ENCODE measurements at regions of chr15 and their contacts with region 1.

Region 1: GRCh38 chr15:98518823-98519561 is 129.3 kb upstream of the IGF1R start:
- DNase-seq: peak; percentile 80
- H3K4me3 Mint-ChIP-seq: no peak overlapping the region
- H3K27ac Mint-ChIP-seq: no peak overlapping the region
- H3K4me1 Mint-ChIP-seq: peaks cover 4% of the 10 kb centered on the region
- H3K27me3 Mint-ChIP-seq: no peaks in the 10 kb centered on the region
- CTCF ChIP-seq: peak; percentile 53

Region 2: GRCh38 chr15:98187549-98187948 is 331.4 kb before region 1 on chr15:
- CTCF ChIA-PET with region 1: no interaction called
- POLR2A ChIA-PET with region 1: no interaction called
- intact Hi-C with region 1: no loop called
- DNase-seq: no peak
- H3K4me3 Mint-ChIP-seq: no peak overlapping the region
- H3K27ac Mint-ChIP-seq: no peak overlapping the region
- H3K4me1 Mint-ChIP-seq: no peaks in the 10 kb centered on the region
- H3K27me3 Mint-ChIP-seq: peaks cover 11% of the 10 kb centered on the region
- CTCF ChIP-seq: no peak

Region 3: GRCh38 chr15:98421419-98422129 is 97.4 kb before region 1 on chr15:
- CTCF ChIA-PET with region 1: no interaction called
- POLR2A ChIA-PET with region 1: no interaction called
- intact Hi-C with region 1: no loop called
- DNase-seq: peak; percentile 45
- H3K4me3 Mint-ChIP-seq: no peak overlapping the region
- H3K27ac Mint-ChIP-seq: no peak overlapping the region
- H3K4me1 Mint-ChIP-seq: no peaks in the 10 kb centered on the region
- H3K27me3 Mint-ChIP-seq: peaks cover 3% of the 10 kb centered on the region
- CTCF ChIP-seq: peak; percentile 94

Region 4: DNA sequence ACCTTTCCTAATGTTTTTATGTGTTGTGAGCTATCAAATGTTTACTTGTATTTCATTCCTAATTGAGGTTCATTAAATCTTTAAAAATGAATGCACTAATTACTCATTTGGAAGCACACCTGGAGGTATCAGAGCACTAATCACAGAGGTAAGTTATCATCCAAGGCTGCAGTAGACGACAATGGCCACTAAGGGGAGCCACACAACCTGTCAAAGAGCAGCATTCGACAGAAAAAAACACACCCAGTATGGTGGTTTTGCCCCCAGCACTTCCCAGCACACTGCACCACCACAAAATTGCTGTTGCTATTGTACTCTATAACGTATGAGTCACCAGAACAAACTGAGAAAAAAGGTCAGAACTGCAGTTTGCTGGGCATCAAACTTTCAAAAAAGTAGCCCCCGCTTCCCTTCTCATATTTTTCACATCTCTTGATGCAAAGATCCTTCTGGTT is 76.6 kb before region 1 on chr15:
- CTCF ChIA-PET with region 1: interaction called, 5 read pairs
- POLR2A ChIA-PET with region 1: no interaction called
- intact Hi-C with region 1: loop called (anchors 5 kb)
- DNase-seq: peak; percentile 89
- H3K4me3 Mint-ChIP-seq: no peak overlapping the region
- H3K27ac Mint-ChIP-seq: no peak overlapping the region
- H3K4me1 Mint-ChIP-seq: peaks cover 9% of the 10 kb centered on the region
- H3K27me3 Mint-ChIP-seq: peaks cover 22% of the 10 kb centered on the region
- CTCF ChIP-seq: peak; percentile 89

Region 5: GRCh38 chr15:98537516-98538060 is 18.6 kb after region 1 on chr15:
- CTCF ChIA-PET with region 1: interaction called, 11 read pairs
- POLR2A ChIA-PET with region 1: no interaction called
- intact Hi-C with region 1: no loop called
- DNase-seq: peak; percentile 23
- H3K4me3 Mint-ChIP-seq: no peak overlapping the region
- H3K27ac Mint-ChIP-seq: no peak overlapping the region
- H3K4me1 Mint-ChIP-seq: no peaks in the 10 kb centered on the region
- H3K27me3 Mint-ChIP-seq: peaks cover 89% of the 10 kb centered on the region
- CTCF ChIP-seq: no peak

Region 6: DNA sequence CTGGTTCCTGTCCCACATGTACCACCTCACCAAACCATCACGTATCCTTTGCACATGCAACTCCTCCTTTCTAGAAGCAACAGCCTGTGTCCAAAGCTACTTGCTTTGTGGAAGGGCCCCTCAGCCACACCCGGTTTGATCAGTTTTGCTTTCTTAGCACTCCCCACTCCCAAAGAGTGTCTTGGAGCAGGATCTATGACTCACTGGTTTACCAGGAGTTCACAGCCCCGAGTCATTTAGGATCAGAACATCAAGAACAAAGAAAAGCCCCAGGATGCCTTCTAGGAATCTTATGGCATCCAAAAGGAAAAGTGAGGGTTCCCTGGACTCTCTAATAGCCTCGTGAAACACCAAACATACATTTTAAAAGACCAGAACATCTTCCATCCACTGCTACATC is 78.7 kb after region 1 on chr15:
- CTCF ChIA-PET with region 1: no interaction called
- POLR2A ChIA-PET with region 1: no interaction called
- intact Hi-C with region 1: no loop called
- DNase-seq: peak; percentile 24
- H3K4me3 Mint-ChIP-seq: no peak overlapping the region
- H3K27ac Mint-ChIP-seq: no peak overlapping the region
- H3K4me1 Mint-ChIP-seq: peaks cover 14% of the 10 kb centered on the region
- H3K27me3 Mint-ChIP-seq: peaks cover 41% of the 10 kb centered on the region
- CTCF ChIP-seq: no peak

Region 7: DNA sequence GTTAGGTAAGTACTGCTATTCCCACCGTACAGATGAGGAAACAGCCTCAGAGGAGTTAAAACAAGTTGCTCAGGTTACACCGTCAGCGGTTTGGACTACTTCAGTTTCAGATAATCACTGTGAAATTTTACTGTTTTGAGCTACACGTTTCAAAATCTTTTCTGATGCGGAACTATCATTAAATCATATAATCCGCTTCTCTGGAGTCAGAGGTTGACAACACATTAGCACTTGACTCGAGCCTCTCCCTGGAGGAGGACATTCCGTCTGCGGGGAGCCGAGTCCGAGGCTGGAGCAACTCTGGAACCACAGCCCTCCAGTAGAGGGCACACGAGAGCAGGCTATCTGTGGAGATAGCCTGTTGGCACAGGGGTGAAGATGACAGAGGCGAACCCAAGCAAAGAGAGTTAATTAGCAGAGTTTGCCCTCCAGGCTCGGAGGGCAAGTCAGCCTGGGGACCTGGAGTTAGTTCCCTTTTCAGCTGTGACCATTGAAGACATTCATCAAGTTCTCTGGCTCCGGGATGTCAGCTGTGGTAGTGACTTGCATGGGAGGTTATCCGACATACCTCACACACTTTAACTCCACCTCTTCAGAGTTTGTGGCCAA is 260.6 kb after region 1 on chr15:
- CTCF ChIA-PET with region 1: interaction called, 5 read pairs
- POLR2A ChIA-PET with region 1: no interaction called
- intact Hi-C with region 1: loop called (anchors 10 kb)
- DNase-seq: peak; percentile 69
- H3K4me3 Mint-ChIP-seq: peak overlapping the region; percentile 45
- H3K27ac Mint-ChIP-seq: no peak overlapping the region
- H3K4me1 Mint-ChIP-seq: no peaks in the 10 kb centered on the region
- H3K27me3 Mint-ChIP-seq: no peaks in the 10 kb centered on the region
- CTCF ChIP-seq: peak; percentile 58

Region 8: GRCh38 chr15:98904544-98904943 is 385.6 kb after region 1 on chr15:
- CTCF ChIA-PET with region 1: interaction called, 33 read pairs
- POLR2A ChIA-PET with region 1: interaction called, 4 read pairs
- intact Hi-C with region 1: loop called (anchors 1 kb)
- DNase-seq: peak; percentile 70
- H3K4me3 Mint-ChIP-seq: no peak overlapping the region
- H3K27ac Mint-ChIP-seq: peak overlapping the region; percentile 51
- H3K4me1 Mint-ChIP-seq: peaks cover 37% of the 10 kb centered on the region
- H3K27me3 Mint-ChIP-seq: no peaks in the 10 kb centered on the region
- CTCF ChIP-seq: peak; percentile 52

Region 9: GRCh38 chr15:99076552-99077308 is 557.7 kb after region 1 on chr15:
- CTCF ChIA-PET with region 1: interaction called, 13 read pairs
- POLR2A ChIA-PET with region 1: interaction called, 3 read pairs
- intact Hi-C with region 1: loop called (anchors 1 kb)
- DNase-seq: peak; percentile 84
- H3K4me3 Mint-ChIP-seq: peak overlapping the region; percentile 60
- H3K27ac Mint-ChIP-seq: no peak overlapping the region
- H3K4me1 Mint-ChIP-seq: peaks cover 6% of the 10 kb centered on the region
- H3K27me3 Mint-ChIP-seq: peaks cover 13% of the 10 kb centered on the region
- CTCF ChIP-seq: peak; percentile 66

Measured in MCF 10A (cell line).